Esophagus muscularis mucosa (tissue), 4 donors: ENCODE measurements at regions of chr1 and their contacts with region 1.

Region 1: DNA sequence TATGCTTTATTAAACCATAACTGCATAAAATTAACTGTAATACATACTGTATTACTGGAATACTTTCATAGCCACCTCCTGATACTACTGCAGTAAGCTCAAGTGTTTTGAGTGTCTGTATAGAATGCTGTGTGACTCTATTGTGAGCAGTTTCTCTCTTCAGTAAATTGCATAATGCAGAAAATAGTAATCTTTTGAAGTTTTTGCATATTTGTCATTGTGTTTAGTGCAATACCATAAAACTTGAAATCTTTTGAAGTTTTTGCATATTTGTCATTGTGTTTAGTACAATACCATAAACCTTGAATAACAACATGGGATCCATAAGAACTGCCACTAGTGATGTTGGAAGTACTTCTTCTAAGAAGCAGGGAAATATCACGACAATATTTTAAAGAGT is 11.2 kb downstream of the TPR start:
- DNase-seq: no peak
- H3K4me3 ChIP-seq: no peak overlapping the region
- H3K27ac ChIP-seq: no peak overlapping the region
- H3K4me1 ChIP-seq: peaks cover 0 to 6% (median 0%) of the 10 kb centered on the region in 4 donors
- H3K27me3 ChIP-seq: no peaks in the 10 kb centered on the region
- CTCF ChIP-seq: no peak
- EP300 ChIP-seq: no peak
- POLR2A ChIP-seq: no peak

Region 2: DNA sequence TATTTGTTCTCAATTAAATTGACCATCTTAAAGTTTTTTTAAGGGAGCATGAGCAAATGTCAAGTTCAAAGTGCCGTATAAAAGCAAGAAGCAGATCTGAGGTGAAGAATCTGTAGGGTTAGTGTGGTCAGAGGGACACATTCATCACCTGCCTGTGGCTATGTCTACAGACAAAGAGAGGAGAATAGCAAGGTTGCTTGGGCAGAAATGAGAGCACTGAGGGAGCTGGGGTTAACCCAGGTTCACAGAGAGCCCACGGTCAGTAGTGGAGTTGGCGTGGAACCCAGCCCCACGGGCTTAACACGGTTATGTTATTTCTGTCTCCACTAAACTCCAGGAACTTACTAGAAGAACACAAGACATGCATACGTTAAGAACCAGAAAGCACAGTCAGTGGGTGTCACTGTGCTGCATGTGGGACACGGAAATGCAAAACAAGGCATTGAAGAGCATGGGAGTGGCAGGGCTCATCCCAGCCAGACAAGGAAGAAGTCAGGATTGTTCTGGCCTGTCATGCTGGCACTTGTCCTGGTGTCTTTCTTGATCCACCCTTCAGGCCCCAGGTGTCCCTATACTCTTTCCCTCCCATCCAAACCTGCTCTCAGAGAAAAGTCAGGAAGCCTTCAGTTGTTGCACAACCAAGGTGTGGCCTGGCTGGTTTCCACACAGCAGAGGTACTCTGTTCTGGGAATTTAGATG is 951.4 kb before region 1 on chr1:
- intact Hi-C with region 1: no loop called
- DNase-seq: no peak
- H3K4me3 ChIP-seq: no peak overlapping the region
- H3K27ac ChIP-seq: no peak overlapping the region
- H3K4me1 ChIP-seq: no peaks in the 10 kb centered on the region
- H3K27me3 ChIP-seq: no peaks in the 10 kb centered on the region
- CTCF ChIP-seq: no peak
- EP300 ChIP-seq: no peak
- POLR2A ChIP-seq: no peak

Region 3: GRCh38 chr1:185595835-185596667 is 767.8 kb before region 1 on chr1:
- intact Hi-C with region 1: no loop called
- DNase-seq: no peak
- H3K4me3 ChIP-seq: no peak overlapping the region
- H3K27ac ChIP-seq: no peak overlapping the region
- H3K4me1 ChIP-seq: peaks cover 0 to 15% (median 0%) of the 10 kb centered on the region in 4 donors
- H3K27me3 ChIP-seq: no peaks in the 10 kb centered on the region
- CTCF ChIP-seq: peak in 2 of 3 experiments; percentile 30 to 45
- EP300 ChIP-seq: no peak
- POLR2A ChIP-seq: no peak

Region 4: DNA sequence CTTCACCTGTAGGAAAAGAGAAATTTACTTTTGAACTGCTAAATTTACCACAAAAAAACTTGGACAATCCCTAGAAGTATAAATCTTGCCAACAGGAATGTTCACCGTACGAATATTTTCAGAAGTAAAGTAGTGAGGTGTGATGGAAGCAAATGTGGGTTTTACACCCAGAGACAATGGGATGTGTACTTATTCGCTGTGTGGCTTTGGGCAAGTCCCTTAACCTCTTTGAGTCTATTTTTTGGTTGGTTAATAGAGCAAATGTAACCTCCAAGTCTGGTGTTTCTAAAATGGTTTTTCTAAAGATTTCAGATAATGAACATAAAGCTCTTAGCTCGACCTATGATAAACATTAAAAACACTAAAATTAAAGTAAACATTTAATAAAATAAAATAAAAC is 40.0 kb before region 1 on chr1:
- intact Hi-C with region 1: loop called (anchors 5 kb)
- DNase-seq: no peak
- H3K4me3 ChIP-seq: no peak overlapping the region
- H3K27ac ChIP-seq: no peak overlapping the region
- H3K4me1 ChIP-seq: no peaks in the 10 kb centered on the region
- H3K27me3 ChIP-seq: no peaks in the 10 kb centered on the region
- CTCF ChIP-seq: no peak
- EP300 ChIP-seq: no peak
- POLR2A ChIP-seq: no peak